WTC11 (cell line): ENCODE measurements at regions of chr20 and their contacts with region 1.

Region 1: DNA sequence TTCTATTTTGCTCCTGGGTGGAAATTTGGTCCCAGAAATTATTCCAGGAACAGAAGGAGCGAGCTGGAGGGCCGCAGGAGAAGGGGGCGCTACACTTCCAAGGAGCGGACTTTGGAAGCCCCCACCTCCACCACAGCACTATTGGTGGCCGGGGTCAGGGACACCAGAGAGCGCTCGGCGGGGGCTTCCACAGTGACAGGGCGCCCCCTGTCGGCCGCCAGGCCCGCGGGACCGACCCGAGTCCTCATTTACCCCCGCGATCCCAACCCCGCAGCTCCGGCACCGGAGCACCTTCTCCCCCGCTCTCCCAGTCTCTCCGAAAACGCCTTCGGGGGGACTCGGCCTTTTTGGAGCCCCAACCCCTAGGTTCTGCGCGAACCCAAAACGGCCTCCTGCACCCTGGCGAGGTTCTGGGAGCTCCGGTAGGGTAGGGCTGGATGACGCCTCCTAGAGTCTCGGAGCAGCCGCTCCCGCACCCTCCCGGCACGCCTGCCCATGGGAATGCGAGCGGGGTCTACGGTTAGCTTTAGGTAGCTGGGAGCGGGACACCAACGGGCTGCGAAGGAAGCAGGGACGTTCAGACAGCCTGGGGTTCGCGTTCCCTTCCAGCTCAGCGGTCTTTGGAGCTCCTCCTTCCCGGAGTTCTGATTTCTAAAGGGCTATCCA is 2.4 kb upstream of the FOXA2 start:
- DNase-seq: peak; percentile 83
- ATAC-seq: peak; percentile 44
- H3K4me3 Mint-ChIP-seq: peak overlapping the region; percentile 79
- H3K27ac Mint-ChIP-seq: no peak overlapping the region
- H3K4me1 Mint-ChIP-seq: peaks cover 58% of the 10 kb centered on the region
- H3K27me3 Mint-ChIP-seq: peaks cover 91% of the 10 kb centered on the region
- CTCF ChIP-seq: peak; percentile 91

Region 2: GRCh38 chr20:22389836-22390542 is 196.8 kb before region 1 on chr20:
- CTCF ChIA-PET with region 1: interaction called, 15 read pairs
- POLR2A ChIA-PET with region 1: no interaction called
- DNase-seq: peak; percentile 52
- ATAC-seq: peak; percentile 90
- H3K4me3 Mint-ChIP-seq: no peak overlapping the region
- H3K27ac Mint-ChIP-seq: no peak overlapping the region
- H3K4me1 Mint-ChIP-seq: peaks cover 44% of the 10 kb centered on the region
- H3K27me3 Mint-ChIP-seq: peaks cover 14% of the 10 kb centered on the region
- CTCF ChIP-seq: no peak

Region 3: DNA sequence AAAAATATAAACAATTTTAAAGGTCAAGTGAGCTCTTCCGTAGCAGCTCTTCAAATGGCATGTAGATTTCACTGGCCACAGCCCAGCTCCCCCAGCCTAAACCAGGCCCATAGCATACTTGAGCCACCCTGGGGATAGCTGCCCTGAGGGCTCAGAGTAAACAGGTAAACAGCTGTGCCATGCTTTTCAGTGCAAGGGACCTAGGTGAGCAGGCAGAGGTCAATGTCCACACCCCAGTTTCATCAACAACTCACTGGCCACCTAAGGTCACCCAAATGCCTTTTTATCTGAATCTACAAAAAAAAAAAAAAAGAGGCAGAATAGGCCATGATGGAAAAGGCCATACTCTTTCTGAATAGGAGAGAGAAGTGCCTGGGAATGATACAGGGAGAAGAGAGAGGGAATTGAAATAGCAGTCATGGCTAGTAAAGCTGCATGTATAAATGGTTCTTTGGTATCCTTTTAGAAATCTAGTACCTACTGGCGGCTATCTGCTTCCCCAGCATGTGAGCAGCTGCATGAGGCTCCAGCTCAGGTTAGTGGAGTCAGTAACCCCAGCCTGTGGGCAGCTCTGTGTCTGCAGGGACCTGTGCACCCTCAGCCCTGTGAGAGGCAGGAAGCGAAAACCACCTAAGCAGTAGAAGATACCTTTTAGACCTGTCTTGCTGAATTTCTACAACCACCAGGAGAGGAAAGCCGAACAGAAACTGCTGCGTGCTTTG is 79.4 kb before region 1 on chr20:
- CTCF ChIA-PET with region 1: interaction called, 10 read pairs
- POLR2A ChIA-PET with region 1: no interaction called
- DNase-seq: no peak
- ATAC-seq: no peak; the same call in 1 of the 2 replicates
- H3K4me3 Mint-ChIP-seq: no peak overlapping the region
- H3K27ac Mint-ChIP-seq: no peak overlapping the region
- H3K4me1 Mint-ChIP-seq: peaks cover 8% of the 10 kb centered on the region
- H3K27me3 Mint-ChIP-seq: peaks cover 19% of the 10 kb centered on the region
- CTCF ChIP-seq: no peak

Region 4: GRCh38 chr20:22575087-22575721 is 11.6 kb before region 1 on chr20:
- CTCF ChIA-PET with region 1: interaction called, 44 read pairs
- POLR2A ChIA-PET with region 1: interaction called, 3 read pairs
- DNase-seq: no peak
- ATAC-seq: no peak
- H3K4me3 Mint-ChIP-seq: no peak overlapping the region
- H3K27ac Mint-ChIP-seq: no peak overlapping the region
- H3K4me1 Mint-ChIP-seq: peaks cover 76% of the 10 kb centered on the region
- H3K27me3 Mint-ChIP-seq: peaks cover 100% of the 10 kb centered on the region
- CTCF ChIP-seq: no peak

Region 5: DNA sequence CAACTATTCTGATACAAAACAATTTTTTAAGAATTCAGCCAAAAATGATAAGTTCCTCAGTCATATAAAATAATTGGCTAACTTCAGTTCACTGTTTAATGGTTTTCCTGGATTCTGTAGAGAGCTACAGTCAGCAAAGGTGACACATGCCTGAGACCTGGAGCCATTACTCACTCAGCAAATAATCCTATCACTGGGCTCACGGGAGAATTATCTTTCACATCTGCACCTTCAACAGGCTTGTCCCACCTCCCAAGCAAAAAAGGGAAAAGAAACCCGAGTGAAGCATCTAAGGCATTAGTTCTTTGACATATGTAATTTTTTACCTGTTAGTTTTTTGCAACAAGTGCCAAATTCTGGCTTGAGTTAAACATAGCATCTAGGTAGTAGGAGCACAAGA is 32.5 kb after region 1 on chr20:
- CTCF ChIA-PET with region 1: interaction called, 19 read pairs
- POLR2A ChIA-PET with region 1: no interaction called
- DNase-seq: no peak
- ATAC-seq: no peak
- H3K4me3 Mint-ChIP-seq: no peak overlapping the region
- H3K27ac Mint-ChIP-seq: no peak overlapping the region
- H3K4me1 Mint-ChIP-seq: peaks cover 25% of the 10 kb centered on the region
- H3K27me3 Mint-ChIP-seq: peaks cover 47% of the 10 kb centered on the region
- CTCF ChIP-seq: no peak

Region 6: DNA sequence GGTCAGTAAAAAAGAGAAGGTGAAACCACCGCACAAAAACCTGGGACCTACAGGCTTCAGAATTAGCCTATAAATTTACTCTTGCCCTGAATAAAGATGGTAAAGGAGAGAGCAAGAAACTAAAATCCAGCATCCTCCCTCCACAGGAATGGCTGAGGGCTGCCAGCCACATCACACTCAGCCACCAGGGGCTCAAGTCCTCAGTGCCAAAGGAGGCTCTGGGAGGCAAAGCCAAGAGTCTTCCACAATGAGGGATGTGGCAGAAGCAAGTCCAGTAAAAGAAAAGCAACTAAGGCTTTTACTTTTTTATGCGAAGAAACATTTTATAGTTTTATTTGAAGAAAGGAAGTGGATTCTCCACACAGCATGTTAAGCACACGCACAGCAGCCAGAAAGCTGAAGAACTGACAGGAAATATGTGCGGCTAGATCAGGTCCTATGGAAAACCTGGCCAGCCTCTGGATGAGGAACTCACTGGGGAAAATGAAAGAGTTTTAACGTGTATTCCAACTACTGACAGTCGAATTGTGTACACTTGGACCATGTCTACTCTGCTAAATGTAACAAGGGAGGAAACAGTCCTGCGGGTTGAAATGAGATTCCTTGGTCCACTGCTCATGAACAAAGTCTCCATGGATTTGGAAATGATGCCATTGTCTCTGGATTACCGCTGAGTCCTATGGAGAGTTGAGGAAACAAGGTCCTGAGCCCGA is 229.0 kb after region 1 on chr20:
- CTCF ChIA-PET with region 1: no interaction called
- POLR2A ChIA-PET with region 1: no interaction called
- DNase-seq: peak; percentile 20
- ATAC-seq: peak; percentile 81
- H3K4me3 Mint-ChIP-seq: no peak overlapping the region
- H3K27ac Mint-ChIP-seq: no peak overlapping the region
- H3K4me1 Mint-ChIP-seq: peaks cover 9% of the 10 kb centered on the region
- H3K27me3 Mint-ChIP-seq: no peaks in the 10 kb centered on the region
- CTCF ChIP-seq: no peak